ENCODE measurements at regions of chr11 and their contacts with region 1.

Region 1: DNA sequence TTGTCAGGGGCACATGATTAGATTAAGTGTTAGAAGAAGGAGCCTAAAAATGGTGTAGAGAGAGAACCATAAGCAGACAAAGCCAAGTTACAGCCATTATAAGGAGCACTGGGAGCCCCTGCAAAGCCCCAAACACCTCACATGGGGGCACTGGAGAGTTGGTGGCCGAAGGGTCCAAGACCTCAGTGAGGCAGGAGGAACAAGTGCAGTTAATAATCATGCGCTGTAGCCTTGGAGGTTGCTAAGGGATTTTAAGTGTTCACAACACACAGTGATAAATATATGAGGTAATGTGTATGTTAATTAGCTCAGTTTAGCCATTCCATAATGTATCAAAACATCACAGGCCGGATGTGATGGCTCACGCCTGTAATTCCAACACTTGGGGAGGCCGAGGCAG is 54.4 kb upstream of the JAM3 start:
- DNase-seq: no peak
- H3K4me3 ChIP-seq: no peak overlapping the region
- H3K27ac ChIP-seq: peak overlapping the region in 1 of 4 donors; percentile 68
- H3K4me1 ChIP-seq: peaks cover 0 to 13% (median 9%) of the 10 kb centered on the region in 4 donors
- H3K27me3 ChIP-seq: no peaks in the 10 kb centered on the region
- CTCF ChIP-seq: peak in 3 of 4 experiments; percentile 12 to 43 (median 35)
- EP300 ChIP-seq: no peak
- POLR2A ChIP-seq: no peak

Region 2: DNA sequence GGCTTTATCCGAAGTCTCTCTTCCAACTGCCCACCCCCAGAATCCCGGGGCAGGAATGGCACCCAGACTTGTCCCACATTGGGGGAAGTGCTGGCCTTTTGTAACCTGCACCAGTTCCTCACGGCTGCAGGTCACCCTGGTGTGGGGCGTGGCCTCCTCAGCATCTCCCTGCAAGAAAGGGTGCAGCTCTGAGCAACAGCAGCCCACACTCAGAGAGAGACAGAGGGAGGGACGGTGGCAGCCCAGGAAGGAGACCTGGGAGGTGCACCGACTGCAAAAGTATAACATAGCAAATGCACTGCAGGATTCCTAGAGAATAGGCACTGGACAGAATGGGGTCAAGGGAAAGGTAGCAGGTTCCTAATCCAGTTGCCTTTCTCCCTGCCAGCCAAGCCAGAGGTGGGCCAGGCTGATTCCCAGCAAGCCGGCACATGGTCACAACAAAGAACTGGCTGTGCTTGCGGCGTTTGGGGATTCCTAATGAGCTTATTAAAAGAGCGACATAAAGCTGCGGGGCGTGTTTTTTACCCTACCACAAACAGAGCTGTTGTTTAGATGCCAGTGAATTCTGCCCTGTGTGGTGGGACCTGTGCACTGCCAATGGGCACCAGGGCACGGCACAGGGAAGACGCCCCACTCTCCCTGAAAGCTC is 39.5 kb before region 1 on chr11:
- intact Hi-C with region 1: loop called (anchors 5 kb)
- DNase-seq: no peak
- H3K4me3 ChIP-seq: no peak overlapping the region
- H3K27ac ChIP-seq: no peak overlapping the region
- H3K4me1 ChIP-seq: no peaks in the 10 kb centered on the region
- H3K27me3 ChIP-seq: no peaks in the 10 kb centered on the region
- CTCF ChIP-seq: no peak
- EP300 ChIP-seq: no peak
- POLR2A ChIP-seq: no peak

Region 3: GRCh38 chr11:134062265-134063123 is 48.0 kb after region 1 on chr11:
- intact Hi-C with region 1: no loop called
- DNase-seq: no peak
- H3K4me3 ChIP-seq: no peak overlapping the region
- H3K27ac ChIP-seq: no peak overlapping the region
- H3K4me1 ChIP-seq: no peaks in the 10 kb centered on the region
- H3K27me3 ChIP-seq: no peaks in the 10 kb centered on the region
- CTCF ChIP-seq: no peak
- EP300 ChIP-seq: no peak
- POLR2A ChIP-seq: no peak

Region 4: DNA sequence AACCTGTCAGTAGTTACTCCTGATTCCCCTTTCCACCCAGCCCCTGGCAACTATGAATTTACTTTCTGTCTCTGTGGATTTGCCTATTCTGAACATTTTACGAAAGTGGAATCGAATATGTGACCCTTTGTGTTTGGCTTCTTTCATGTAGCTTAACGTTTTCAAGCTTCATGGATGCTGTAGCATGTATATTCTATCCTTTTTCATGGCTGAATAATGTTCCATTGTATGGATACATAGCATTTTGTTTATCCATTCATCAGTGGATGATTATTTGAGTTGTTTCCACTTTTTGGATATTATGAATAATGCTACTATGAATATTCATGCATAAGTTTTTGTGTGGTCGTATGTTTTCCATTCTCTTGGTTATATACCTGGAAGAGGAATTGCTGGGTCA is 308.0 kb after region 1 on chr11:
- intact Hi-C with region 1: no loop called
- DNase-seq: no peak
- H3K4me3 ChIP-seq: no peak overlapping the region
- H3K27ac ChIP-seq: no peak overlapping the region
- H3K4me1 ChIP-seq: peaks cover 0 to 8% (median 0%) of the 10 kb centered on the region in 4 donors
- H3K27me3 ChIP-seq: no peaks in the 10 kb centered on the region
- CTCF ChIP-seq: no peak
- EP300 ChIP-seq: no peak
- POLR2A ChIP-seq: no peak

Measured in sigmoid colon (tissue), 7 donors.